GM12878 (cell line): ENCODE measurements at regions of chr1 and their contacts with region 1.

Region 1: DNA sequence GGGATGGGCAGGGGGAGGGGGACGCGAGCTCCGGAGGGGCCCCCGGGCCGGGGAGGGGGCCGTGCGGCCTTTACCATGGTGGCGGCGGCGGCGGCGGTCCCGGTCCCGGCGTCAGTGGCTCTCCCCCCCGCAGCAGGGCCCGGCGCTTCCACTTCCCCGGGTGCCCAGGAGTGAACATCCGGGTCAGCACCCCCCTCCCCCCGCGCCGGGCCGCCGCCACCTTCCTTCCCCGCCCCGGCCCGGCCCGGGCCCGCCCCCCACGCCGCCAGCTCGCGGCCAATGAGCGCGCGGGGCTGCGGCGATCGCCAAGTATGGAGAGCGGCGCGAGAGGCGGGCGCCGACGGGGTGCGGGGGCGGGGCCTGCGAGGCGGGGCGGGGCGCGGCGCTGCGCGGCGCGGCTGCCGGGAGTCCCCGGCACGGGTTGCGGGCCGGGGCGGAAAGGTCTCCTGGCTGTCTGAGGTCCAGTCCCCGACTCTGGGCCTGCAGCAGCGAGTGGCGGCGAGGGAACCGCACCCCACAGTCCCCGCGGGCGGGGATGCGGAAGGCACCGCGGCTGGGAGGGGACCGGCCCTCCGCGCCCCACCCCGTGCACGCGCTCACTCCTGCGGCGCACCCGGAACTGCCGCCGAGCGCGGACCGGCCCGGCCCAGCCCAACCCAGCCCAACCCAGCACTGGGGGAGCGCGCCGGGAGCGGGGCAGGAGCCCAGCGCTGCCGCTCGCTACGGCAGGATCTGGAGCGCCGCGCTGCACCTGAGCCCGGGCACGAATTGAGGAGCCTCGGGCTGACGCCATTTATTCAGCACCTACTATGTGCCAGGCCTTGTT is at the start of gene CAPZB:
- DNase-seq: no peak
- ATAC-seq: peak; percentile 85
- H3K4me3 ChIP-seq: peak within 1 kb of the TSS; percentile 99
- H3K27ac ChIP-seq: peak within 1 kb of the TSS; percentile 98
- H3K4me1 ChIP-seq: peaks cover 19% of the 10 kb centered on the region
- H3K27me3 ChIP-seq: no peaks in the 10 kb centered on the region
- CTCF ChIP-seq: no peak
- EP300 ChIP-seq: no peak
- POLR2A ChIP-seq: peak; percentile 95
- RAD21 ChIP-seq: no peak
- polyA plus RNA-seq, gene CAPZB: 121 to 147 TPM

Region 2: GRCh38 chr1:19311959-19312781 is 173.4 kb before region 1 on chr1 and contains the starts of genes AKR7A2 and SLC66A1:
- CTCF ChIA-PET with region 1: no interaction called
- POLR2A ChIA-PET with region 1: no interaction called
- RAD21 ChIA-PET with region 1: interaction called, 3 read pairs
- SMC1A ChIA-PET with region 1: no interaction called
- in situ Hi-C with region 1: no loop called
- intact Hi-C with region 1: loop called (anchors 10 kb)
- DNase-seq: peak; percentile 49
- ATAC-seq: peak; percentile 85
- H3K4me3 ChIP-seq: peak within 1 kb of the TSS; percentile 92
- H3K27ac ChIP-seq: peak within 1 kb of the TSS; percentile 80
- H3K4me1 ChIP-seq: peaks cover 44% of the 10 kb centered on the region
- H3K27me3 ChIP-seq: no peaks in the 10 kb centered on the region
- CTCF ChIP-seq: peak in 1 of 3 experiments; percentile 7; a peak in 1 of 6 replicates
- EP300 ChIP-seq: no peak
- POLR2A ChIP-seq: peak; percentile 87
- RAD21 ChIP-seq: no peak
- polyA plus RNA-seq, gene AKR7A2: 1.3 to 9.8 TPM
- polyA plus RNA-seq, gene SLC66A1: 0.58 to 1.8 TPM

Region 3: DNA sequence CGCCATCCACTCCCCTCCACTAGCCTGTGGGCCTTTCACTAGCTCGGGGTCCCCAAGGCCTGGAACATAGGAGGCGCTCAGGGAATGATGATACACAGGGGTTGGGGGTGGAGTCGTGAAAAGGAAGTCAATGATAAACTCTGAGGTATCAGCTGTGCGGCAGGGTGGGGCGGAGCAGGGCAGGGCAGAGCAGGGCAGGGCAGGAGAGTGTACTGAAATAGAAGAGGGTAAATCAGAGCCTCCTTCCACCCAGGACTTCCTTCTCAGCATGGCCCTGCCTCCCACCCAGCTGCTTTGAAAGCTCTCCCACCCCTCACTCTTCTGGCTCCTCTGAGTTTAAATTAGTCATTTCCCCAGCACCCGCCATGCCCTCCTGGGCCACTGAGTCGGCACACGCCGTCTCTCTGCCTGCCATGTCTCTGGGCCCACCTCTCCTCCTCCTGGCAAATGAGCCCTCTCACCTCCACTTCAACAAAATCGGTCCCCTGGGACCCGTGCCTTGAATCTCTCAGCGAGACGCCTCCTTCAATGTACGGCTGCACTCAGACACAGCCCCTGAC is 17.1 kb before region 1 on chr1:
- CTCF ChIA-PET with region 1: interaction called, 18 read pairs
- POLR2A ChIA-PET with region 1: interaction called, 16 read pairs
- RAD21 ChIA-PET with region 1: interaction called, 4 read pairs
- SMC1A ChIA-PET with region 1: interaction called, 61 read pairs
- in situ Hi-C with region 1: no loop called
- intact Hi-C with region 1: no loop called
- DNase-seq: no peak
- ATAC-seq: peak; percentile 88
- H3K4me3 ChIP-seq: peak overlapping the region; percentile 3; the same call in 1 of the 2 replicates
- H3K27ac ChIP-seq: peak overlapping the region; percentile 28
- H3K4me1 ChIP-seq: peaks cover 34% of the 10 kb centered on the region
- H3K27me3 ChIP-seq: no peaks in the 10 kb centered on the region
- CTCF ChIP-seq: peak in 1 of 3 experiments; percentile 18; a peak in 1 of 6 replicates
- EP300 ChIP-seq: no peak
- POLR2A ChIP-seq: 0 out of 2 replicates have a peak, but pooled peaks have one; percentile 35
- RAD21 ChIP-seq: no peak

Region 4: GRCh38 chr1:19504796-19505692 is 19.5 kb after region 1 on chr1:
- CTCF ChIA-PET with region 1: interaction called, 10 read pairs
- POLR2A ChIA-PET with region 1: no interaction called
- RAD21 ChIA-PET with region 1: interaction called, 3 read pairs
- SMC1A ChIA-PET with region 1: interaction called, 3 read pairs
- in situ Hi-C with region 1: no loop called
- intact Hi-C with region 1: no loop called
- DNase-seq: no peak
- ATAC-seq: peak; percentile 15; the same call in 2 of the 3 replicates
- H3K4me3 ChIP-seq: no peak overlapping the region
- H3K27ac ChIP-seq: no peak overlapping the region
- H3K4me1 ChIP-seq: no peaks in the 10 kb centered on the region; the same call in 1 of the 2 replicates
- H3K27me3 ChIP-seq: no peaks in the 10 kb centered on the region
- CTCF ChIP-seq: no peak
- EP300 ChIP-seq: no peak
- POLR2A ChIP-seq: no peak
- RAD21 ChIP-seq: no peak

Region 5: GRCh38 chr1:19582302-19582701 is 96.7 kb after region 1 on chr1:
- CTCF ChIA-PET with region 1: interaction called, 25 read pairs
- POLR2A ChIA-PET with region 1: no interaction called
- RAD21 ChIA-PET with region 1: interaction called, 10 read pairs
- SMC1A ChIA-PET with region 1: interaction called, 21 read pairs
- in situ Hi-C with region 1: no loop called
- intact Hi-C with region 1: loop called (anchors 1 kb)
- DNase-seq: peak; percentile 42
- ATAC-seq: peak; percentile 100
- H3K4me3 ChIP-seq: no peak overlapping the region
- H3K27ac ChIP-seq: no peak overlapping the region
- H3K4me1 ChIP-seq: no peaks in the 10 kb centered on the region
- H3K27me3 ChIP-seq: no peaks in the 10 kb centered on the region
- CTCF ChIP-seq: peak; percentile 86 to 89 (median 87)
- EP300 ChIP-seq: no peak
- POLR2A ChIP-seq: no peak
- RAD21 ChIP-seq: peak; percentile 90

Region 6: GRCh38 chr1:19596714-19597495 is 111.3 kb after region 1 on chr1:
- CTCF ChIA-PET with region 1: interaction called, 3 read pairs
- POLR2A ChIA-PET with region 1: interaction called, 8 read pairs
- RAD21 ChIA-PET with region 1: interaction called, 5 read pairs
- SMC1A ChIA-PET with region 1: interaction called, 7 read pairs
- in situ Hi-C with region 1: no loop called
- intact Hi-C with region 1: loop called (anchors 2 kb)
- DNase-seq: peak; percentile 99
- ATAC-seq: peak; percentile 89
- H3K4me3 ChIP-seq: peak overlapping the region; percentile 88
- H3K27ac ChIP-seq: peak overlapping the region; percentile 99
- H3K4me1 ChIP-seq: peaks cover 9% of the 10 kb centered on the region
- H3K27me3 ChIP-seq: no peaks in the 10 kb centered on the region
- CTCF ChIP-seq: no peak
- EP300 ChIP-seq: peak; percentile 55 to 58; a peak in 3 of 4 replicates
- POLR2A ChIP-seq: peak; percentile 89
- RAD21 ChIP-seq: no peak

Region 7: GRCh38 chr1:19651141-19651737 is 165.7 kb after region 1 on chr1:
- CTCF ChIA-PET with region 1: interaction called, 7 read pairs
- POLR2A ChIA-PET with region 1: no interaction called
- RAD21 ChIA-PET with region 1: interaction called, 11 read pairs
- SMC1A ChIA-PET with region 1: interaction called, 3 read pairs
- in situ Hi-C with region 1: no loop called
- intact Hi-C with region 1: loop called (anchors 5 kb)
- DNase-seq: no peak
- ATAC-seq: peak; percentile 81
- H3K4me3 ChIP-seq: no peak overlapping the region
- H3K27ac ChIP-seq: no peak overlapping the region
- H3K4me1 ChIP-seq: no peaks in the 10 kb centered on the region
- H3K27me3 ChIP-seq: no peaks in the 10 kb centered on the region; a peak in 1 of 4 replicates
- CTCF ChIP-seq: peak; percentile 59 to 86 (median 74)
- EP300 ChIP-seq: no peak
- POLR2A ChIP-seq: no peak
- RAD21 ChIP-seq: peak; percentile 83

Region 8: DNA sequence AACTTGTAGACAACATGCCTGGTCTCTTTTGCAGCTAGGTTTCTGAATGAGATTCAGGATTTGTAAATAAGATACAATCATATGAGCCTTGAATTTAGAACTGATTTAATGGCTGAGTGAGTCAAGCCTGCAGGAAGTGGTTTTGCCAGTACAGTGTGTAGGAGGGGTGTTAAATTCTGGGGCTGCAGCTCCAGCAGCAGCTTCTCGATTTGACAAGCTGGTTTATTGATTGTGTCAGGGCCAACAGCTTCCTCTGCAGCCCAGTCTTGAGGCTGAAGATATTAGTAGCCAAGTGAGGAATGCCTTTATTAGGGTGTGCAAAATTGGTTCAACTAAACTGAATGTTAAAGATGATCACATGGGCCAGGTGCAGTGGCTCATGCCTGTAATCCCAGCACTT is 573.0 kb after region 1 on chr1:
- CTCF ChIA-PET with region 1: no interaction called
- POLR2A ChIA-PET with region 1: no interaction called
- RAD21 ChIA-PET with region 1: no interaction called
- SMC1A ChIA-PET with region 1: no interaction called
- in situ Hi-C with region 1: no loop called
- intact Hi-C with region 1: no loop called
- DNase-seq: no peak
- ATAC-seq: peak; percentile 83
- H3K4me3 ChIP-seq: no peak overlapping the region
- H3K27ac ChIP-seq: no peak overlapping the region
- H3K4me1 ChIP-seq: peaks cover 19% of the 10 kb centered on the region
- H3K27me3 ChIP-seq: no peaks in the 10 kb centered on the region
- CTCF ChIP-seq: no peak
- EP300 ChIP-seq: no peak
- POLR2A ChIP-seq: no peak
- RAD21 ChIP-seq: no peak